ENCODE measurements at regions of chr4 and their contacts with region 1.

Region 1: DNA sequence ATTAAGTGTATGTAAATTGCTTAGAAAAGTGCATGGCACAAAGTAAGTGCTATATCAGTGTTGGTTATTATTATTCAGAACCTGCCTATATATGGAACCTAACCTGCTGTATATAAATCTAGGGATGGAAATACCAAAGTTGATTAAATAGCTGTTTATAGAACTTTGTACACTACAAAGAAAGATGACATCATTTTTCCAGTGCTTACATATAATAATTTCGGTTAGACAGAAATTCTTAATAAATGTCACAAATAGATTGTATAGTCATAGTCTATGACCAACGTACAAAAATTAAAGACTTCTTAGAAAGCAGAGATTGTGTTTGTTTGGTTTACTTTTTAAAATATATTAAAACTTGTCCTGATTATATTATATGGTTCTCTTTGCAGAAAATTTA is 4.4 kb downstream of the GYPB start:
- DNase-seq: no peak
- H3K4me3 ChIP-seq: no peak overlapping the region
- H3K27ac ChIP-seq: no peak overlapping the region
- H3K4me1 ChIP-seq: no peaks in the 10 kb centered on the region
- H3K27me3 ChIP-seq: no peaks in the 10 kb centered on the region
- CTCF ChIP-seq: no peak

Region 2: GRCh38 chr4:143587703-143588102 is 427.1 kb before region 1 on chr4:
- CTCF ChIA-PET with region 1: no interaction called
- dilution Hi-C with region 1: no loop called
- in situ Hi-C with region 1: no loop called
- intact Hi-C with region 1: loop called (anchors 2 kb)
- DNase-seq: peak; percentile 11
- H3K4me3 ChIP-seq: no peak overlapping the region
- H3K27ac ChIP-seq: no peak overlapping the region
- H3K4me1 ChIP-seq: no peaks in the 10 kb centered on the region
- H3K27me3 ChIP-seq: peaks cover 3% of the 10 kb centered on the region
- CTCF ChIP-seq: peak; percentile 7 to 17

Region 3: GRCh38 chr4:143773998-143774895 is 240.6 kb before region 1 on chr4:
- CTCF ChIA-PET with region 1: no interaction called
- dilution Hi-C with region 1: no loop called
- in situ Hi-C with region 1: no loop called
- intact Hi-C with region 1: loop called (anchors 5 kb)
- DNase-seq: peak; percentile 48
- H3K4me3 ChIP-seq: no peak overlapping the region
- H3K27ac ChIP-seq: no peak overlapping the region
- H3K4me1 ChIP-seq: no peaks in the 10 kb centered on the region
- H3K27me3 ChIP-seq: peaks cover 1% of the 10 kb centered on the region
- CTCF ChIP-seq: peak; percentile 78 to 95

Region 4: GRCh38 chr4:143784567-143784966 is 230.2 kb before region 1 on chr4:
- CTCF ChIA-PET with region 1: no interaction called
- dilution Hi-C with region 1: no loop called
- in situ Hi-C with region 1: no loop called
- intact Hi-C with region 1: no loop called
- DNase-seq: no peak
- H3K4me3 ChIP-seq: no peak overlapping the region
- H3K27ac ChIP-seq: no peak overlapping the region
- H3K4me1 ChIP-seq: no peaks in the 10 kb centered on the region
- H3K27me3 ChIP-seq: no peaks in the 10 kb centered on the region
- CTCF ChIP-seq: no peak

Region 5: GRCh38 chr4:144687466-144687865 is 672.7 kb after region 1 on chr4:
- CTCF ChIA-PET with region 1: no interaction called
- dilution Hi-C with region 1: no loop called
- in situ Hi-C with region 1: no loop called
- intact Hi-C with region 1: no loop called
- DNase-seq: peak; percentile 33
- H3K4me3 ChIP-seq: no peak overlapping the region
- H3K27ac ChIP-seq: no peak overlapping the region
- H3K4me1 ChIP-seq: no peaks in the 10 kb centered on the region
- H3K27me3 ChIP-seq: no peaks in the 10 kb centered on the region
- CTCF ChIP-seq: no peak

Measured in mammary epithelial cell (primary cell).